Activated CD4-positive, alpha-beta T cell treated with anti-CD3 and anti-CD28 coated beads, Interleukin-2, amount 10 ng/mL, durations not matched to agents 24 days and 14 days (primary cell): ENCODE measurements at regions of chr4 and their contacts with region 1.

Region 1: DNA sequence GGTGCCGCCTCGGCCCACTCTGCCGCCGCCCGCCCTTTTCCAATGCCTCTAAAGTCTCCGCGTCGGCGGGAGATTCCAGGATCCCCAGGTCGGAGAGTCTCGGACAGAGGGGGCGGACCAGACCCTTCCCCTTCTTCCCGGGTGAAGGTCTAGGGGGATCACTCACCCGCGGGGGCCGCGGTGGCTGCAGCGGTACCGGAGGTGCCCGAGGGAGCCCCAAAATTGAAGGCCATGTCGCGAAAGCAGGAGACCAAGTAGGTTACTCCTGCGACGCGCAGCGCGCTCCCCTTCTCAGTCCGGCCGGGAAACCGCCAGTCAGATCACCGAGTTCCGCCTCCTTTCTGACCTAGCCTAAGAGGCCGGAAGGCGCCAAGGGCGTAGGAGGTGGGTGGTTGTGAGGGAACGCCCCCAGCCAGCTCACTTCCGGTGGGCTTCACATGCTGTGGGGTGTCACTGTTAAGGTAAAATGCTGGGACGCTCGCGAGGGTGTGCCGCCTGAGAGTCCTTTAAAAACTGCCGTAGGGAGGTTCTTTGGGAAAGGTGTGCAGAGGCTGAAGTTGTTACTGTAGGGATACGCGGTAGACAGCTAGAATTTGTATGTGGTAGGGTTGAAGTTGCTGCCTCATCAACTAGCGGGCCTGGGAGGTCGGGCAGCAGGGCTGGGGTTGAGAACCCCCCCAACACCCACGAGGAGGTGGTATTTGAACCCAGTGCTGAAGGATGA is at the start of gene NUP54:
- DNase-seq: peak; percentile 99
- H3K4me3 Mint-ChIP-seq: peak within 1 kb of the TSS; percentile 95
- H3K27ac Mint-ChIP-seq: peak within 1 kb of the TSS; percentile 92
- H3K4me1 Mint-ChIP-seq: peaks cover 29% of the 10 kb centered on the region
- H3K27me3 Mint-ChIP-seq: peaks cover 1% of the 10 kb centered on the region
- total RNA-seq, gene NUP54: 72.6 and 75.1 TPM in 2 replicates

Region 2: DNA sequence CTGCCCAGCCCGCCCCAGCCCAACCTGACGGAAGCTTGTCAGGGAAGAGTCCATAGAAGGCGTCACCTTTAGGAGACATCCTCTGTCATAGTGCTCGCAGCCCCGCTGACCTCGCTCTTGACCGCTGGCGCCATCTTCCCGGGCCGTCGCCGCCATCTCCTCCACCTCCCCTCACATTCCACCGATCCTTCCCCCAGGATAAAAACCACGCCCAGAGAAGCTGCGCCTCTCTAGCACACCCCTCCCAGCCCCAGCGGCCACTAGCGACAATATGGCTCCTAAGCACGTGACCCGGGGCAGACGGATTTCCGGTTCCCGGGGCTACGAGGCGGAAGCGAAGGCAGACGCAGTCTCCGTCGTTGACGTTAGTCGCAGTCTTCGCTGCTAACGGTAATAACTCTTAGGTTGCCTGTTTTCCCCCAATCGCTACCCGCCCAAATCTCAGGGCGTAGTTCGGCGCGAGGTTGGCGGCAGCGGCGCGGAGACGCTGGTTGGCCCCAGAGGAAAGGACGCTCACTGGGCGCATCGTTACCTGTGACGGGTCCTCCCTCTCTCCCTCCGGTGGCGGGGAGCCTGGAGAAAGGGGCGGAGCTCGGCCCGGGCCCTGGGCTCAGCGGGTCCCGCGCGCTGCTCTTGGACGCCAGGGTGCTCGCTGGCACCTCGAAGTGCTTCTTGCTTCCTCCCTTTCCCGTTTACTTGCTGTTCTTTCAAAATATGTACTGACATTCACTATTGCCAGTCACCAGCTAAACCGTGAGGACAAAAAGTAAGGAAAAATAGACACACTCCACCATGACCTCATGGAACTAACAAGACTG is 634.0 kb before region 1 on chr4 and contains the starts of genes RCHY1 and THAP6:
- intact Hi-C with region 1: loop called (anchors 1 kb)
- DNase-seq: peak; percentile 98
- H3K4me3 Mint-ChIP-seq: no peak within 1 kb of the TSS
- H3K27ac Mint-ChIP-seq: peak within 1 kb of the TSS; percentile 99
- H3K4me1 Mint-ChIP-seq: peaks cover 29% of the 10 kb centered on the region
- H3K27me3 Mint-ChIP-seq: no peaks in the 10 kb centered on the region
- total RNA-seq, gene RCHY1: 22.4 and 29.4 TPM in 2 replicates
- total RNA-seq, gene THAP6: 16.3 and 22.7 TPM in 2 replicates

Region 3: DNA sequence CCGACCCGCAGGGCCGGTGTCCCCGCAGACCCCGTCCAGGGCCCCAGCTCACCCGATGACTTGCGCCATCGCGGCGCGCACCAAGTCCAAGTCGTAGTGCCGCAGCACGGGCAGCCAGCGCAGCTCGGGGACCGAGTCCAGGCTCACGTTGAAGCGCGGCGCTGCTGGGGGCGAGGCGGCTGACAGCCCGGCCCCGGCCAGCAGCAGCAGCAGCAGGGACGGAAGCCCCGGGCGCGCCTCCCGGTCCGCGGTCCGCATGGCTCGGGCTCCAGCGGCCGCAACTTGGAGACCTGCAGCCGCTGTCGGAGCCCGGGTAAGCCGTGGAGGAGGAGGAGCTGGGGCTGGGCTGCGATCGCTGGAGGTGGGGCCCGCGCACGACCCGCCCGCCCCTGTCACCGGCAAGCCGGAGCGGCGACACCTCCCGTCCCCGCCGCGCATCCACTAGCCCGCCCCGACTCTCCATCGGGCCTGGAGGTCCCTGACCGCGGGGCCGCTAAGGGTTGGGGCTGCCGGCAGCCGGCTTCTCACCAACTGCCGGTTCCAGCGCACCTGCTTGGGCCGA is 207.5 kb before region 1 on chr4 and contains the start of gene NAAA:
- intact Hi-C with region 1: loop called (anchors 1 kb)
- DNase-seq: peak; percentile 96
- H3K4me3 Mint-ChIP-seq: peak within 1 kb of the TSS; percentile 98
- H3K27ac Mint-ChIP-seq: peak within 1 kb of the TSS; percentile 99
- H3K4me1 Mint-ChIP-seq: peaks cover 17% of the 10 kb centered on the region
- H3K27me3 Mint-ChIP-seq: no peaks in the 10 kb centered on the region
- total RNA-seq, gene NAAA: 31.9 and 35.6 TPM in 2 replicates

Region 4: DNA sequence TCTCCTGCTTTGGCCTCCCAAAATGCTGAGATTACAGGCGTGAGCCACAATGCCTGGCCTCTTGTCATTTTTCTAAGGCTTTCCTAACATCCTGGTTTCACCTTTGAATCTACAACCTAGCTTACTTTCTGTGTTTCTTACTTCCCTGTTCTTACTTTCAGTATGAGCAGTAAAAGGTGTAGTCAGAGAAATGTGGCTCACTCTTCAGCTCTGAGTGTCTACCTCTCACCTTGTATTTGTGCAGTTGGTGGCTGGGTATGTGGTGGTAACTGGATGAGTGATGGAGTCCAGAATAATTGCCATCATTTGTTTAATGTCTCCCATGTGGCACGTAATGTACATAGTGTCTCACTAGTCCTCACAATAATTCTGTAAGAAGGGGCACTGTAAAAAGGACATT is 93.3 kb before region 1 on chr4:
- intact Hi-C with region 1: loop called (anchors 5 kb)
- DNase-seq: peak; percentile 65
- H3K4me3 Mint-ChIP-seq: no peak overlapping the region
- H3K27ac Mint-ChIP-seq: peak overlapping the region; percentile 57
- H3K4me1 Mint-ChIP-seq: peaks cover 40% of the 10 kb centered on the region
- H3K27me3 Mint-ChIP-seq: peaks cover 5% of the 10 kb centered on the region

Region 5: GRCh38 chr4:77156533-77156911 is 1008.2 kb after region 1 on chr4:
- intact Hi-C with region 1: loop called (anchors 5 kb)
- DNase-seq: peak; percentile 99
- H3K4me3 Mint-ChIP-seq: peak overlapping the region; percentile 100
- H3K27ac Mint-ChIP-seq: peak overlapping the region; percentile 99
- H3K4me1 Mint-ChIP-seq: peaks cover 34% of the 10 kb centered on the region
- H3K27me3 Mint-ChIP-seq: peaks cover 3% of the 10 kb centered on the region

Region 6: DNA sequence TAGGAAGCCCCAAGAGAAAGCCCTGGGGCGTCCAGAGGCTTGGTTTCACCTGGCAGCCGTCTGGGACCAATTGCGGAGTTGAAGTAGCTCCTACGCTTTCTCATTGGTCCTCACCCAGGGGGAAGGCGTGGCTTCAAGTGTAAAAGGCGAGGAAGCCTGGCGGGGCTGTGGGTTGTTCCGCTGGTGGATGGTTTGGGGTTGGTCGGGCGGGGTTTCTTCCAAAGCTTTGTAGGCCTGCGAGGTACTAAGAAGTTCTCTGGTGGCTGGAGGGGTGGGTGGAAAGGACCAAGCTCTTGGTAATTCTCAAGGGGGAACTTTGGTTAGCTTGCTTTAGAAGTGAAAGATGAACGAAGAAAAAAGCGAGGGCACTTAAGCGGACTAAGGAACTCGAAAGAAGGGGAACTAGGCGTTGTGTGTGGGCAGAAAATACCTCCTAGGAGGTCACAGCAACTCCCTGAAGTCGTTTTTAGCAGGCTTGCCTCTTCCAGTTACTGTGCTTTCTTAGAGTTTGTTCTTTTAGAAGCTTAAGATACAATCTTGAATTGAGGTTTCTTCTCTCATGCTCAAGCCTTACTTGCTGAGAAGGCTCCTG is 1045.3 kb after region 1 on chr4:
- intact Hi-C with region 1: no loop called
- DNase-seq: peak; percentile 91
- H3K4me3 Mint-ChIP-seq: peak overlapping the region; percentile 85
- H3K27ac Mint-ChIP-seq: peak overlapping the region; percentile 92
- H3K4me1 Mint-ChIP-seq: peaks cover 23% of the 10 kb centered on the region
- H3K27me3 Mint-ChIP-seq: peaks cover 7% of the 10 kb centered on the region